ENCODE measurements at regions of chr12 and their contacts with region 1.

Region 1: DNA sequence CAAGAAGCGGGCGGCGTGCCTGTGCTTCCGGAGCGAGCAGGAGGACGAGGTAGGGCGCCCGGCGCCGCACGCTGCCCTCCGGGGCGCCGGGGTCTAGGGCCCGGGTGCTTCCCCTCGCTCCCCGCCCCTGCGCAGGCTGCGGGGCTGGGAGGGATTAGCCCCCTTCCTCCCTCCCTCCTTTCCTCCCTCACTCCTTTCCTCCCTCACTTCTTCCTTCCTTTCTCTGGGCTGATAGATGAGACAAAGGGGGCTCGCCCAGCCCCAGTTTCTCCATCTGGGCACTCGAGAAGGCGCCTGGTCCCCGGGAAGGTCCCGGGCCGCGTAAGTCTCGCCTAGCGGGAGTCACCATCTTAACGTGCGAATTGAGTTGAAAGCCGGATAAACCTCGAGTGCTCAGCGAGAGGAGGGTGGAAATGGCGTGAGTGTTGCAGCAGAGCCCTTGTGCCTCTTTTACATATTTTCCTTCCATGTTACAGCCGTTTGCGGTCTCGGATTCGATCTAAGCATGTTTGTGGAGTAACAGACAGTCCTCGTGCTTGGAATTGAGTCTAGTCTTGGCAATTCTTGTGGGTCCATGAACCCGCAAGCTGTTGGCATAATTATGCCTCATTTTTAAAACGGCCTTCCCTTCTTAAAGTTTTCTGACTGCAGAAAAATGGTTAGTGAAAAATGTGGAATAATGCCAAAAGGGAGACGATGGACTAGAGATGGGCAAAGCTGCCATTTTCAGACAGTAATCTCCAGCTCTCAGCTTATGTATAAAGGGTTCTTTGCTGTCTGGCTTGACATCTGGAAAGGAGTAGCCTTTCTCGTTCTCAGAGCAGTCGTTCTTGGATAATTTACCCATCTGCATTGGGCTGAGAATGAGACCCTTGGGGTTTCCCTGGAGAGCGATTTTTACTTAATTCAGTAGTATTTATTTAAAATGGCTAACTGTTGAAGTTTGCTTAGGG is 924 bp downstream of the NUDT4 start:
- DNase-seq: peak; percentile 90
- H3K4me3 Mint-ChIP-seq: peak overlapping the region; percentile 100
- H3K27ac Mint-ChIP-seq: peak overlapping the region; percentile 100
- H3K4me1 Mint-ChIP-seq: peaks cover 37% of the 10 kb centered on the region
- H3K27me3 Mint-ChIP-seq: no peaks in the 10 kb centered on the region

Region 2: DNA sequence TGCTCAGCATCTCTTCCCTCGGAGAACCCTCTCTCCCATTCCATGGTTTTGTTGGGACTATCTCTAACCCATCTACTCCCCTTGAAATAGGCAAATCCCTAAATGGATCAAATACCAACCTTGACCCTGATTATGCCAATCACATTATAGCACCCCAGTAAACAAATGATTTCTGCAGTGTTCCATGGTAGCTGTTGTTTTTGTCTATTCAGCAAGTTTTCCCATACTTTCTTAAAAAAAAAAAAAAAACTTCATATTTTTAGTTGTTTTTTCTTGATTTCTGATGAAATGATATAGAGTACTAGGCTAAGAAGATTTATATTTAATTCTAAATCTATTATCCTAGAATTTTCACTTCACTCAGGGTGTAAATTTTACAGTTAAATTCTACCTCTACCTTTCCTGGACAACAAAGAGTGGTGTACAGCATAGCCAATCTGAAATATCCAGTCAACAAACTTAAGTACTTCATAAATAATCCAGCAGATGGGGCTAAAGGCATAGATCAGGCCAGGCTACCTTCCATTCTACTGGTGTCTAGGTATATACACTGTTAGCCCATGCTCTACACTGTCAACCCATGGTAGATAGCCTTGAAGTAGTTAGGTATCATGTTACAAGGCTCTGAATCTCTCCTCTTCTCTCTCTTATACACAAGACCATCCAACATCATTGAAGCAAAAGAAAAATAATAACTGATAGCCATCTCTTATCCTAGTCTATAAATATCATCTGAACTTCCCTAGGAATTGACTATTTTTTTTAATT is 593.7 kb before region 1 on chr12:
- intact Hi-C with region 1: loop called (anchors 5 kb)
- DNase-seq: peak; percentile 82
- H3K4me3 Mint-ChIP-seq: no peak overlapping the region
- H3K27ac Mint-ChIP-seq: no peak overlapping the region
- H3K4me1 Mint-ChIP-seq: peaks cover 11% of the 10 kb centered on the region
- H3K27me3 Mint-ChIP-seq: no peaks in the 10 kb centered on the region

Region 3: DNA sequence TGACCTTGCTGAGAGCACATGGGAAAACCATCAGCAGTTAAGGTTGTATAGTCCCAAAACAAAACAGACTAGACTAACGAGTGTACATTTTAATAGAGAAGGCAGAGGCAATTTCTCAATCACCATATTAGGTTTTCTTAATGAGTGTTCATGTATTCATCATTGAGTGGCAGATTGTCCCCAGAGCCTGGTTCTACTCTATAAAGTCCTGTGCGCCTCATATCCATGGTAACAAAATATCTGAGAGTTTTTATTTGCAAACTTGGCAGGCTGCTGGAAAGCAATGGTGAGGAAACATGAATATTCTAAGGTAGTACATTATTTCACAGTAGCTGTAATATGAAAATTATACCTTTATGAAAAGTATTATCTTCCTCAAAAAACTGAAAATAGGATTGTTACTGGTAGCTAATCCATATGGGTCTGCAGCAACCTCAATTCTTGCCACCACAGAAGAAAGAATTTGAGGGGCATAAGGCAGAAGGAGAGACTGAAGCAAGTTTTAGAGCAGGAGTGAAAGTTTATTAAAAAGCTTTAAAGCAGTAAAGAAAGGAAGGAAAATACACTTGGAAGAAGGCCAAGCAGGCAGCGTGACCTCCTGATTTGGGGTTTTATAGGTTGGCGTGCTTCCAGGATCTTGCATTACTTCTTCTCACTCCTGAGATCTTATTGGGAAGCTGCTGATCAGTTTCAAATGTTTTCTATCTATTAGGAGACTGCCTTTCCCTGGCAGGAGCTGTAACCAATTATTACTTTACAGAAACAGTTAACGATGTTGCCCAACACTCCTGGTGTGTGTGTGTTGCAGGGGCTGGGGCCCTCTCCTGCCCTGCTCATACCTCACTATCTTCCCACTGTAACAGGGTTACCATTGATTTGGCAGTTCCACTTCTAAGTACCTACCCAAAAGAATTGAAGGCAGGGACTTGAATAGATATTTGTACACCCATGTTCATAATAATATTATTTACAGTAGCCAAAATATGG is 154.9 kb before region 1 on chr12:
- intact Hi-C with region 1: no loop called
- DNase-seq: no peak
- H3K4me3 Mint-ChIP-seq: no peak overlapping the region
- H3K27ac Mint-ChIP-seq: no peak overlapping the region
- H3K4me1 Mint-ChIP-seq: peaks cover 3% of the 10 kb centered on the region
- H3K27me3 Mint-ChIP-seq: peaks cover 4% of the 10 kb centered on the region

Region 4: GRCh38 chr12:93243689-93244513 is 134.7 kb before region 1 on chr12:
- intact Hi-C with region 1: loop called (anchors 2 kb)
- DNase-seq: peak; percentile 74
- H3K4me3 Mint-ChIP-seq: peak overlapping the region; percentile 78
- H3K27ac Mint-ChIP-seq: peak overlapping the region; percentile 77
- H3K4me1 Mint-ChIP-seq: peaks cover 34% of the 10 kb centered on the region
- H3K27me3 Mint-ChIP-seq: no peaks in the 10 kb centered on the region

Region 5: DNA sequence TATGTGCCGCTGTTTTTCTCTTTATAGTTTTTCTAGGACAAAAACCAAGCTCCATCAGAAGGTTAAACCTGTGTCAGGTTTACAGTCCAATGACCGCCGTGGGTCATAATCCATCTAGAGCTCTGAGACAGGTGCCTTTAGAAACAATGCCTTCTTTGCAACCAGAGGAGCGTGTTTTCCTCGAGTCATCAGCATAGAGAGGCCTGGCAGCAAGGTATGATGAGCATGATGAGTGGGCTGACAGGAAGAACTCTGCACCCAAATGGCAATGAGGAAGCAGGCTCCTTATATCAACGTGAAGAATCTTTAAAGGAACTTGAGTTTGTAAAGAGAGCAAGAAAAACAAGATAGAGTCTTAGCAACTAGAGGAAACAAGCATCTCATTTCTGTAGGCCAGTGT is 61.4 kb before region 1 on chr12:
- intact Hi-C with region 1: no loop called
- DNase-seq: no peak
- H3K4me3 Mint-ChIP-seq: no peak overlapping the region
- H3K27ac Mint-ChIP-seq: no peak overlapping the region
- H3K4me1 Mint-ChIP-seq: peaks cover 3% of the 10 kb centered on the region
- H3K27me3 Mint-ChIP-seq: no peaks in the 10 kb centered on the region

Region 6: DNA sequence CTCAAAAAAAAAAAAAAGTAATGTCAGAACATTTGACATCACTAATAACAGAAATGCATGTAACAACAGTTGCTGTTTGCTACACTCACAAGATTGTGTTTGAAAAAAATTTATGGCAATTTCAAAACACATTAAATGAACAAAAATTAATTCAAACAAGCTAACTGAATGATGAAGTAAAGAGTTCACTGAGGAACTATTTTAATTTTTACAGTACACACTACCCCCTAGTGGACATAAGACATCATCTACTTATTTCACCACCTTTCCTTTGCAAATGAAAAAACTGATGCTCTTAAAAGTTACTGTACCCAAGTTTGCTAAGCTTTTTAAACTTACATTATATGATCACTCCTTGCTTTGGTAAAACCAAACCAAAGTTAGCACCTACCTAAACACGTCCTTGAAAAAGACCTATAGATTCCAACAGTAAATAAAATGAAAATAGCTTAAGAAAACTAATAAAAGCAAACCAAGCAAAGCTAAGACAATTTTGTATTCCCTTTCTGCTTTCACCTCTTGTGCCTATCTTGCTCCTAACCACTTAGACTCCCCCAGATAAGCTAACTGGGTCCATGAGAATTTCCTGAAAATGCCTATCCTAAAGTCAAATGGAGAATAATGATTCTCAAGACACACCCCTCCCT is 40.9 kb after region 1 on chr12:
- intact Hi-C with region 1: loop called (anchors 2 kb)
- DNase-seq: peak; percentile 52
- H3K4me3 Mint-ChIP-seq: no peak overlapping the region
- H3K27ac Mint-ChIP-seq: peak overlapping the region; percentile 41
- H3K4me1 Mint-ChIP-seq: peaks cover 62% of the 10 kb centered on the region
- H3K27me3 Mint-ChIP-seq: no peaks in the 10 kb centered on the region

Region 7: DNA sequence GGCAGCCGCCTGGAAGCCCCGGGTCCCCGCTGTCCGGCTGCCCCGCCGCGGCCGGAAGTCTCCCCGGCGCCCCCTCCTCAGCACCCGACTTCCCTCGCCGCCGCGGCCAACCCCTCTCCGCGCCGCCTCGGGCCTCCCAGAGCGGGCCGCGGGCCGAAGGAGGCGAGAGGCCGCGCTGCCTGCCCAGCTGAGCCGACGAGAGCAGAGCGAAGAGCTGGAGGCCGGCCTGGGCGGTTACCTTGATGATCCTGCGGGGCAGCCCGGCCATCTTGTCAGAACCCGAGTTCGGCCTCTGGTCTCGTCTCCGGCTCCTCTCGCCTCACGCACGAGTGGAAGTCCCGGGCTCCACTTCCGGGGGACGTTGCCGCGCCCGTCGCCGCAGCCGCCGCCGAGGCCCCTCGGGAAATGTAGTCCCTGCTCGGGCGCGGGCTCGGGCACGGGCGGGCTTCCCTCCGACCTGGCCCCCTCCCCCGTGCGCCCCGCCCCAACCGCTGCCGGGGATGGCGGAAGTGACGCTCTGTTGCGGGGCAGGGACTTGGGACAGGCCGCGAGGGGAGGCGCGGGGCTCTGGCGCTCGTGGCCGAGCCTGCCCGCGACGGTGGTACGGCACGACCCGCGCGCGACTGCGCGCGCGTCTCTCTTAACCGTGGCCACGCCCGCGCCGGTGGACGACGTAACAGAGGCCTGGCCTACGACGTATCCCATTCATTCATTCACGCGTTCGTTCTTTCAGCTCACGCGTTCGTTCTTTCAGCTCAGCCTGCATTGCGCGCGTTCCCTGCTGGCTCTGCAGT is 63.2 kb after region 1 on chr12 and contains the start of gene UBE2N:
- intact Hi-C with region 1: loop called (anchors 1 kb)
- DNase-seq: peak; percentile 99
- H3K4me3 Mint-ChIP-seq: peak within 1 kb of the TSS; percentile 94
- H3K27ac Mint-ChIP-seq: peak within 1 kb of the TSS; percentile 97
- H3K4me1 Mint-ChIP-seq: peaks cover 43% of the 10 kb centered on the region
- H3K27me3 Mint-ChIP-seq: no peaks in the 10 kb centered on the region
- total RNA-seq, gene UBE2N: 225 and 243 TPM in 2 replicates

Measured in activated CD4-positive, alpha-beta T cell treated with anti-CD3 and anti-CD28 coated beads, Interleukin-2, amount 10 ng/mL, durations not matched to agents 24 days and 14 days (primary cell).